Activated CD4-positive, alpha-beta memory T cell treated with anti-CD3 and anti-CD28 coated beads for 36 hours (primary cell): ENCODE measurements at regions of chr6 and their contacts with region 1.

Region 1: GRCh38 chr6:13328076-13328874 is at the start of gene TBC1D7:
- DNase-seq: peak; percentile 96
- H3K4me3 Mint-ChIP-seq: peak within 1 kb of the TSS; percentile 90
- H3K27ac Mint-ChIP-seq: peak within 1 kb of the TSS; percentile 90
- H3K4me1 Mint-ChIP-seq: peaks cover 20% of the 10 kb centered on the region
- H3K27me3 Mint-ChIP-seq: no peaks in the 10 kb centered on the region
- total RNA-seq, gene TBC1D7: 20.6 to 21.7 TPM

Region 2: DNA sequence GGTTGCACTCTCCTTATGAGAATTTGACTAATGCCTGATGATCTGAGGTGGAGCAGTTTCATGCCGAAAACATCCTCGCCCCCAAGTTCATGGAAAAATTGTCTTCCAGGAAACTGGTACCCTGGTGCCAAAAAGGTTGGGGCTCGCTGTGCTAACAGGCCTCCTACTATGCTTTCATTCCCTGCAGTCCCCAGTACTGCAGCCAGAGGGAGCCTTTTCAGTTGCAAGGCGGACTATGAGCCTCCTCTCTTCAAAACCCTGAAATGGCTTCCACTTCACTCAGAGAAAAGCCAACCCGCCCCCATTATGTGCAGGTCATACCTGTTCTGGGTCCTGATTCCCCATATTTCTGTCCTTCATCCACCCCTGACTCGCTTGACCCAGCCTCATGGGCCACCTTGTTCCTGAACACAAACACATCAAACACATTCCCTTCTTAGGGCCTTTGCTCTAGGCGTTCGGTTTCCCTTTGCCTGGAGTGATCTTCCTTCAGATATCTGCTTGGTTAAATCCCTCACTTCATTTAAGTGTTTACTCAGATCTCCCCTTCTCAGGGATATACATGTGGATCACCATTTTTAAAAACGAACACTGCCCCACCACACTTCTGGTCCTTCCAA is 438.0 kb before region 1 on chr6:
- CTCF ChIA-PET with region 1: interaction called, 3 read pairs
- POLR2A ChIA-PET with region 1: no interaction called
- intact Hi-C with region 1: loop called (anchors 5 kb)
- DNase-seq: peak; percentile 31
- H3K4me3 Mint-ChIP-seq: no peak overlapping the region
- H3K27ac Mint-ChIP-seq: no peak overlapping the region
- H3K4me1 Mint-ChIP-seq: no peaks in the 10 kb centered on the region
- H3K27me3 Mint-ChIP-seq: peaks cover 10% of the 10 kb centered on the region

Region 3: GRCh38 chr6:13194852-13195251 is 133.4 kb before region 1 on chr6:
- CTCF ChIA-PET with region 1: interaction called, 27 read pairs
- POLR2A ChIA-PET with region 1: no interaction called
- intact Hi-C with region 1: loop called (anchors 1 kb)
- DNase-seq: peak; percentile 27
- H3K4me3 Mint-ChIP-seq: no peak overlapping the region
- H3K27ac Mint-ChIP-seq: no peak overlapping the region
- H3K4me1 Mint-ChIP-seq: no peaks in the 10 kb centered on the region
- H3K27me3 Mint-ChIP-seq: peaks cover 12% of the 10 kb centered on the region

Region 4: GRCh38 chr6:13272131-13273046 is 55.9 kb before region 1 on chr6:
- CTCF ChIA-PET with region 1: no interaction called
- POLR2A ChIA-PET with region 1: no interaction called
- intact Hi-C with region 1: loop called (anchors 2 kb)
- DNase-seq: no peak
- H3K4me3 Mint-ChIP-seq: no peak overlapping the region
- H3K27ac Mint-ChIP-seq: no peak overlapping the region
- H3K4me1 Mint-ChIP-seq: peaks cover 16% of the 10 kb centered on the region
- H3K27me3 Mint-ChIP-seq: no peaks in the 10 kb centered on the region

Region 5: DNA sequence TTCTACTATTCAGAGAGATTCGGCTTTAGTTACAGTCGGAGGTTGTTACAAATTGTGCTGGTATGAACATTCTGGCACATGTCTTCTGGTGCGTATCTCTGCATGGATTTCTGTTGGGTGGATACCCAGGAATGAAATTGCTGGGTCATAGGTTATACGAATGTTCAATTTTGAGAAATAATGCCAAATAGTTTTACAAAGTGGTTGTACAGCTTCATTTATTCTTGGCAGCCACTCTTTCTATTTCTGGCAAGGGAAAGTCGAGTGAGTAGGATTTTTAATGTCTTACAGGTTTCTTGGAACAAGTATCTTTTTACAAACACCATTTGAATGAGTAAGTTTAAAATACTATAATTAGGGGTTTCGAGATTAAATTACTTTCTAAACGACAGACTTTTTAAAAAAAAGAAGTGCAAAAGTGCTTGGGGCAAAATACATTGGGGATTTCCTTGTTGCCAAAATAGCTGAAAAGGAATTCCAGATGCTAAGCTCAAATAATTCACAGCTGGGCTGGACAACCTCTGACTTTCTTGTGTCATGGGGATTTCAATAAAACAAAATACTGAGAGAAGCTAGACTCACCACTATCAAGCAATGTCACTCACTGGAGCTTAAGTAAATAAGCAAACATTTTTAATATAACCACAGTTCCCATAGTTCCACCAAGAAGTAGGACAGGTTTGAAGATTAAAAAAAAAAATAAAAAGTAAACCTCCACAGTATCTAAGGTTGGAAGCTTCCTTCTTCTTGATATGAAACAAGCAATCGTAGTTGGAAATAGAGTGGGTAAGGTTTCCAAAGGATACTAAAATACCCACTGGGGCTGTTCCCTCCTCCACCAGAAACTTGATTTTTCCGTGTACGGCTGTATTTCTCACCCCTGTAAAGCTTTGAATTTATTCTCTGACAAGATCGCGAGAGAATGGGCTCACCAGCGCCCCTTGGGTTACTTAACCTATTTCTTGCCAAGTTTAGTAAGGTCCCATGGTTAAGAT is 180.7 kb after region 1 on chr6:
- CTCF ChIA-PET with region 1: no interaction called
- POLR2A ChIA-PET with region 1: no interaction called
- intact Hi-C with region 1: no loop called
- DNase-seq: no peak
- H3K4me3 Mint-ChIP-seq: no peak overlapping the region
- H3K27ac Mint-ChIP-seq: no peak overlapping the region
- H3K4me1 Mint-ChIP-seq: no peaks in the 10 kb centered on the region
- H3K27me3 Mint-ChIP-seq: peaks cover 2% of the 10 kb centered on the region

Region 6: DNA sequence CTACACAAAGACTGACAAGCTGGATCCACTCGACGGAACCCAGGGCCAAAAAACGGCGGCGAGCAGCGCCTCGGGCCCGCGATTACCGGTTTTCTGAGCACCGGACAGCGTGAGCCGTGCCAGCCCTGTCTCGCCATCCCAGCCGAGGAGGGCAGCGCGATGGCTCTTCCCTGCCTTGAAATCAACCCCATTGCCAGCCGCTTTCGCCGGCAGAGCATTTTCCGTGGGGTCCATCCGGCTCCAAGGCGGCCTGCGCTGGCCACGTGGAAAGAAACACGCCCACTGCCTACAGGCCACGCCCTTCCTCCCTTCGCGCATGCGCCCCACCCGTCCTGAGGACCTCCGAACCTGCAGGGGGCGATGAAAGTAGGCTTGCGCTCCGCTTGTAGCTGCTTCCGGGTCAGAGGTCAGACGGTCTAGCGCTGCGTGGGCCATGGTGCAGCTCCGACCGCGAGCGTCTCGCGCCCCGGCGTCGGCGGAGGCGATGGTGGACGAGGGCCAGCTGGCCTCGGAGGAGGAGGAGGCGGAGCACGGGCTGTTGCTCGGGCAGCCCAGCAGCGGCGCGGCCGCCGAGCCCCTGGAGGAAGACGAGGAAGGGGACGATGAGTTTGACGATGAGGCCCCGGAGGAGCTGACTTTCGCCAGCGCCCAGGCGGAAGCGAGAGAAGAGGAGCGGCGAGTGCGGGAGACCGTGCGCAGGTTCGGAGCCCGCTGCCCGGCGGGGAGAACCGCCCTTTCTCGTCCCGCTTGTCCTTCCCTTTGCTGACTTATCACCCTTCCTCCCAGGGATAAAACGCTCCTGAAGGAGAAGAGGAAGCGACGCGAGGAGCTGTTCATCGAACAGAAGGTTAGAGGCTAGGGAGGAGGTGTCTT is 286.9 kb after region 1 on chr6 and contains the start of gene NOL7:
- CTCF ChIA-PET with region 1: interaction called, 10 read pairs
- POLR2A ChIA-PET with region 1: interaction called, 9 read pairs
- intact Hi-C with region 1: no loop called
- DNase-seq: peak; percentile 99
- H3K4me3 Mint-ChIP-seq: peak within 1 kb of the TSS; percentile 87
- H3K27ac Mint-ChIP-seq: peak within 1 kb of the TSS; percentile 92
- H3K4me1 Mint-ChIP-seq: peaks cover 44% of the 10 kb centered on the region
- H3K27me3 Mint-ChIP-seq: no peaks in the 10 kb centered on the region
- total RNA-seq, gene NOL7: 88.0 to 94.9 TPM